Esophagus squamous epithelium (tissue), 5 donors: ENCODE measurements at regions of chr5 and their contacts with region 1.

Region 1: GRCh38 chr5:34486160-34486848 is 169.8 kb upstream of the RAI14 start:
- DNase-seq: no peak
- H3K4me3 ChIP-seq: no peak overlapping the region
- H3K27ac ChIP-seq: peak overlapping the region in 1 of 4 donors; percentile 67
- H3K4me1 ChIP-seq: peaks cover 0 to 29% (median 8%) of the 10 kb centered on the region in 3 donors
- H3K27me3 ChIP-seq: no peaks in the 10 kb centered on the region
- CTCF ChIP-seq: peak; percentile 51 to 88 (median 84)
- POLR2A ChIP-seq: no peak

Region 2: GRCh38 chr5:34533582-34534522 is 47.5 kb after region 1 on chr5:
- intact Hi-C with region 1: loop called (anchors 10 kb)
- DNase-seq: no peak
- H3K4me3 ChIP-seq: no peak overlapping the region
- H3K27ac ChIP-seq: no peak overlapping the region
- H3K4me1 ChIP-seq: peaks cover 0 to 30% (median 0%) of the 10 kb centered on the region in 3 donors
- H3K27me3 ChIP-seq: no peaks in the 10 kb centered on the region
- CTCF ChIP-seq: no peak
- POLR2A ChIP-seq: no peak

Region 3: GRCh38 chr5:34898258-34898895 is 412.1 kb after region 1 on chr5:
- intact Hi-C with region 1: loop called (anchors 5 kb)
- DNase-seq: no peak
- H3K4me3 ChIP-seq: no peak overlapping the region
- H3K27ac ChIP-seq: no peak overlapping the region
- H3K4me1 ChIP-seq: peaks cover 0 to 5% (median 0%) of the 10 kb centered on the region in 3 donors
- H3K27me3 ChIP-seq: no peaks in the 10 kb centered on the region
- CTCF ChIP-seq: peak; percentile 57 to 86 (median 82)
- POLR2A ChIP-seq: no peak